ENCODE measurements at regions of chr6 and their contacts with region 1.

Region 1: GRCh38 chr6:42043787-42044475 is 6.4 kb upstream of the TAF8 start:
- DNase-seq: peak; percentile 94
- ATAC-seq: peak; percentile 31
- H3K4me3 Mint-ChIP-seq: peak overlapping the region; percentile 75
- H3K27ac Mint-ChIP-seq: peak overlapping the region; percentile 99
- H3K4me1 Mint-ChIP-seq: peaks cover 83% of the 10 kb centered on the region
- H3K27me3 Mint-ChIP-seq: no peaks in the 10 kb centered on the region
- CTCF ChIP-seq: peak; percentile 92

Region 2: DNA sequence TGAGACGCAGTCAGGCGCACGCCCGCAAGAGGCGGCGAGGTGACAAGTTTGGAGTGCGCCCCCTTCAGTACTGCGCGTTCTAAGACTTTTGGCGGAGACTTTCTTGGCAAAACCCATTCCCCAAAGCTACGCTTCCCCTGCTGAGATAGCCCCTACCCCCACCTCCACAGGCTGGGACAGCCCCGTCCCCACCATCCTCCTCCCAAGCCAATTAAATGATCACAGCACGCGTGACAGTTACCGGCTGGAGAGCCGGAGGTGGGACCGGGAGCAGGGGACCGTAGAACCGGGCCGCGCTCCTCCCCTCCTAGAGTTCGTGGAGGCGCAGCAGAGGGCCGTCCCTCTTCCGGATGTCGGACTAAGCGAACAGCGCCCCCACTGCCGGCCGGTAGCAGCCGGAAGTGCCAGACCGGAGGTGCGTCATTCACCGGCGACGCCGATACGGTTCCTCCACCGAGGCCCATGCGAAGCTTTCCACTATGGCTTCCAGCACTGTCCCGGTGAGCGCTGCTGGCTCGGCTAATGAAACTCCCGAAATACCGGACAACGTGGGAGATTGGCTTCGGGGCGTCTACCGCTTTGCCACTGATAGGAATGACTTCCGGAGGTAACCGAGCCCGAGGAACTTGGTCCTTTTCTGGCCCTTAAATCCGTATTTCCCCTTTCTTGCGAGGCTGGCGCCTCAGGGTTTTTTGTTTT is 256.6 kb before region 1 on chr6 and contains the start of gene TOMM6:
- CTCF ChIA-PET with region 1: interaction called, 214 read pairs
- POLR2A ChIA-PET with region 1: interaction called, 49 read pairs
- intact Hi-C with region 1: loop called (anchors 2 kb)
- DNase-seq: peak; percentile 97
- ATAC-seq: peak; percentile 86
- H3K4me3 Mint-ChIP-seq: peak within 1 kb of the TSS; percentile 91
- H3K27ac Mint-ChIP-seq: peak within 1 kb of the TSS; percentile 97
- H3K4me1 Mint-ChIP-seq: peaks cover 19% of the 10 kb centered on the region
- H3K27me3 Mint-ChIP-seq: no peaks in the 10 kb centered on the region
- CTCF ChIP-seq: peak; percentile 86
- total RNA-seq, gene TOMM6: 310 to 314 TPM

Region 3: GRCh38 chr6:41895300-41896233 is 148.4 kb before region 1 on chr6 and contains the start of gene USP49:
- CTCF ChIA-PET with region 1: interaction called, 36 read pairs
- POLR2A ChIA-PET with region 1: interaction called, 14 read pairs
- intact Hi-C with region 1: no loop called
- DNase-seq: peak; percentile 96
- ATAC-seq: peak; percentile 95
- H3K4me3 Mint-ChIP-seq: no peak within 1 kb of the TSS
- H3K27ac Mint-ChIP-seq: peak within 1 kb of the TSS; percentile 90
- H3K4me1 Mint-ChIP-seq: peaks cover 7% of the 10 kb centered on the region
- H3K27me3 Mint-ChIP-seq: no peaks in the 10 kb centered on the region
- CTCF ChIP-seq: no peak
- total RNA-seq, gene USP49: 5.7 to 5.9 TPM

Region 4: DNA sequence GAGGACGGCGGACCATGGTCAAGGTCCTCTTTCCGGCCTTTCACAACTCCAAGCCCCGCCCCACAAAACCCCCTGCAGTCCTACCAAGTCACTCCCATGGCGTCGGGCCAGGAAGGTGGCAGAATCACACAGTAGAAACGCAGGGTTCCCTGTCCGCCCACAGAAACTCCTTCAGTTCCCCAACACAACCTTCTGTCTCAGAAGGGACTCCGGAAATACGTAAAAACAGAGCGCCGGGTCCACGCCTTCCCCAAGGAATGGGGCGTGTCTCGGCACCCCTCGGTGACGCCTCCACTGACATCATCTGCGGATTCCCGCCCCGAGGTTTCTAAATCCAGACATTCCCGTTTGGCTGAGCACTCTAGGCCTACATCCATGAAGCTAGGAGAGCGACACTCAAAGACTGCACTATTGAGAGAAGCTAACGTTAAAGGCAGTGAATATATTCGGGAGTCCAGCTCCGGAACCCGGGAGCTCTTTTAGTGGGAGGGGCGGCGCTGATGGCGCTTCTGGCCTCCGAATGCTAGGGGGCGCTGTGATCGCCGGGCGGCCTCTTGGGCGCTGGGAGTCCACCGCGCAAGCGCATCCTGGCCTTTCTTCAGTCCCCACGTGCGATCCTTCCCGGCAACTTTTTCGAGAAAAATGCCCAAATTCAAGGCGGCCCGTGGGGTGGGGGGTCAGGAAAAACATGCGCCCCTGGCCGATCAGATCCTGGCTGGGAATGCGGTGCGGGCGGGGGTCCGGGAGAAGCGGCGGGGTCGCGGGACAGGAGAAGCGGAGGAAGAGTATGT is 122.8 kb before region 1 on chr6 and contains the starts of genes BYSL and MED20:
- CTCF ChIA-PET with region 1: interaction called, 119 read pairs
- POLR2A ChIA-PET with region 1: interaction called, 22 read pairs
- intact Hi-C with region 1: loop called (anchors 5 kb)
- DNase-seq: peak; percentile 96
- ATAC-seq: peak; percentile 89
- H3K4me3 Mint-ChIP-seq: peak within 1 kb of the TSS; percentile 93
- H3K27ac Mint-ChIP-seq: peak within 1 kb of the TSS; percentile 99
- H3K4me1 Mint-ChIP-seq: peaks cover 47% of the 10 kb centered on the region
- H3K27me3 Mint-ChIP-seq: no peaks in the 10 kb centered on the region
- CTCF ChIP-seq: peak; percentile 95
- total RNA-seq, gene BYSL: 56.4 to 59.5 TPM
- total RNA-seq, gene MED20: 23.4 to 28.0 TPM

Region 5: GRCh38 chr6:41966961-41967311 is 77.0 kb before region 1 on chr6:
- CTCF ChIA-PET with region 1: interaction called, 53 read pairs
- POLR2A ChIA-PET with region 1: interaction called, 9 read pairs
- intact Hi-C with region 1: no loop called
- DNase-seq: no peak
- ATAC-seq: no peak
- H3K4me3 Mint-ChIP-seq: no peak overlapping the region
- H3K27ac Mint-ChIP-seq: peak overlapping the region; percentile 92
- H3K4me1 Mint-ChIP-seq: peaks cover 82% of the 10 kb centered on the region
- H3K27me3 Mint-ChIP-seq: no peaks in the 10 kb centered on the region
- CTCF ChIP-seq: no peak

Region 6: GRCh38 chr6:42028234-42029061 is 15.5 kb before region 1 on chr6:
- CTCF ChIA-PET with region 1: interaction called, 12 read pairs
- POLR2A ChIA-PET with region 1: interaction called, 9 read pairs
- intact Hi-C with region 1: loop called (anchors 2 kb)
- DNase-seq: no peak
- ATAC-seq: peak; percentile 16
- H3K4me3 Mint-ChIP-seq: peak overlapping the region; percentile 71
- H3K27ac Mint-ChIP-seq: peak overlapping the region; percentile 98
- H3K4me1 Mint-ChIP-seq: peaks cover 82% of the 10 kb centered on the region
- H3K27me3 Mint-ChIP-seq: no peaks in the 10 kb centered on the region
- CTCF ChIP-seq: no peak

Region 7: GRCh38 chr6:42230345-42231321 is 186.7 kb after region 1 on chr6:
- CTCF ChIA-PET with region 1: no interaction called
- POLR2A ChIA-PET with region 1: no interaction called
- intact Hi-C with region 1: no loop called
- DNase-seq: peak; percentile 20
- ATAC-seq: peak; percentile 20
- H3K4me3 Mint-ChIP-seq: no peak overlapping the region
- H3K27ac Mint-ChIP-seq: no peak overlapping the region
- H3K4me1 Mint-ChIP-seq: no peaks in the 10 kb centered on the region
- H3K27me3 Mint-ChIP-seq: no peaks in the 10 kb centered on the region
- CTCF ChIP-seq: peak; percentile 40

Measured in activated CD8-positive, alpha-beta T cell treated with anti-CD3 and anti-CD28 coated beads for 36 hours (primary cell).